T-cell (primary cell): ENCODE measurements at regions of chr2 and their contacts with region 1.

Region 1: GRCh38 chr2:73290049-73290839 is 3.1 kb downstream of the EGR4 start:
- DNase-seq: peak in 22 of 35 experiments; percentile 19 to 67 (median 40)
- ATAC-seq: no peak
- H3K4me3 ChIP-seq: no peak overlapping the region
- H3K4me3 Mint-ChIP-seq: peak overlapping the region in 2 of 3 donors; percentile 11 to 77
- H3K27ac ChIP-seq: no peak overlapping the region
- H3K27ac Mint-ChIP-seq: no peak overlapping the region
- H3K4me1 ChIP-seq: peaks cover 19 to 31% of the 10 kb centered on the region in 2 experiments
- H3K4me1 Mint-ChIP-seq: peaks cover 10 to 29% (median 25%) of the 10 kb centered on the region in 3 donors
- H3K27me3 ChIP-seq: peaks cover 14 to 39% of the 10 kb centered on the region in 2 experiments
- H3K27me3 Mint-ChIP-seq: peaks cover 24 to 46% of the 10 kb centered on the region in 2 donors

Region 2: DNA sequence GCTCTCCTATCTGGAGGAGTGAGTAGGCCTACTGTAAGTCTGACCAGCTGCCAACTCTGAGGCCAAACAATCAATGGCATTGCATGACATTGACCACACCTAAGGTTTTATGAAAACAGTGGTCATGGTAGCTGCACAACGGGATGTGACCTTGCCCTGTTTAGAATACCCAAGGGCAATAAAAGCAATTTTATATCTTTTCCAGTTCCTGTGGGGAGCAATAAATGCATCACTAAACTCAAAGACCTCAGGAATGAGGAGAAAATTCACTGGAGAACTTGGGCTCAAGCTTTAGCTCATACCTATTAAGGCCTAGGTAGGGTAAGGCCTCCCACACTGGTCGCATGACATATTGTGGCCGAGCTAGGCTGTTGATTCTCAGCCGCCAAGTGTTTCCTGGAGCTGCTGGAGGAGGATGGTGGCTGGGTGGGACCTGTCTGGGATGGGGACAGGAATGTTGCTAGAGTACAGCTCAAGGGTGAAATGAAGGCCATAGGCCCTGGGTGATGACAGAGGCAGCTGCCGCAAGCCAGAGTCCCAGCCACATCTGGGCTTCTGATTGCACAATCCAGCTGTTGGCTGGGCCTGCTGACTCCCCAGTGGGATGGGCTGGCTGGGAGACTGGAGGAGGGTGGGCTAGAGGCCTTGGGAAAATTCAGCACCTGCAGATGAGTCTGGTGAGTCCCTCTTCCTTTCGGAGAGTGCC is 1456.2 kb before region 1 on chr2:
- CTCF ChIA-PET with region 1: no interaction called
- POLR2A ChIA-PET with region 1: no interaction called
- DNase-seq: no peak
- ATAC-seq: no peak
- H3K4me3 ChIP-seq: no peak overlapping the region
- H3K4me3 Mint-ChIP-seq: no peak overlapping the region
- H3K27ac ChIP-seq: no peak overlapping the region
- H3K27ac Mint-ChIP-seq: no peak overlapping the region
- H3K4me1 ChIP-seq: no peaks in the 10 kb centered on the region
- H3K4me1 Mint-ChIP-seq: no peaks in the 10 kb centered on the region
- H3K27me3 ChIP-seq: peaks cover 0 to 17% of the 10 kb centered on the region in 2 experiments
- H3K27me3 Mint-ChIP-seq: peaks cover 8 to 9% of the 10 kb centered on the region in 2 donors

Region 3: GRCh38 chr2:73233154-73233931 is 56.9 kb before region 1 on chr2 and contains the start of gene PRADC1:
- CTCF ChIA-PET with region 1: interaction called, 7 to 11 read pairs
- POLR2A ChIA-PET with region 1: no interaction called
- DNase-seq: peak; percentile 81 to 97 (median 92)
- ATAC-seq: peak; percentile 82 to 85 (median 84)
- H3K4me3 ChIP-seq: peak within 1 kb of the TSS; percentile 75 to 99
- H3K4me3 Mint-ChIP-seq: peak within 1 kb of the TSS; percentile 92 to 98 (median 95)
- H3K27ac ChIP-seq: peak within 1 kb of the TSS; percentile 92
- H3K27ac Mint-ChIP-seq: peak within 1 kb of the TSS; percentile 77 to 96
- H3K4me1 ChIP-seq: peaks cover 15 to 39% of the 10 kb centered on the region in 2 experiments
- H3K4me1 Mint-ChIP-seq: peaks cover 37 to 39% (median 38%) of the 10 kb centered on the region in 3 donors
- H3K27me3 ChIP-seq: no peaks in the 10 kb centered on the region
- H3K27me3 Mint-ChIP-seq: no peaks in the 10 kb centered on the region
- total RNA-seq, gene PRADC1: 6.1 to 9.9 (median 6.4) TPM